Activated B cell treated with CpG ODN at 0.5 μM for 24 hours (primary cell): ENCODE measurements at regions of chr4 and their contacts with region 1.

Region 1: DNA sequence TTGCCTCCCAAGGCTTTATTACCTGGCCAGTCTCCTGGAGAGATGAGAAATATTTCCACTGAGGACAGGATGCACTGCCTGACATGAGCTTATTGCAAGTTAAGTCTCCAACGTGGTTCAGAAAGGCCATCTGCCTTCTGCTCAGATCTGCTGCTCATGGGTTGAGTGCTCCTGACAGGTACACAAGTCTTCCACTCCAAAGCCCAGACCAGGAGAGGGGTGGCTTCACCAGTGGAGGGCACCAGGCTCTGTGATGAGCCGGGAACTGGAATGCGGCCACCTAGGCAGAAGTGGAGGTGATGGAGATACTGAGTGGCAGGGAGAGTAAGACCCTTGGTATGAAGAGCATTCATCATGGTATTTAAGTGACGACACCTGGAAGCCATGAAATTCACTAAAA is 79.5 kb upstream of the IRF2 start:
- DNase-seq: no peak
- ATAC-seq: no peak
- H3K4me3 Mint-ChIP-seq: no peak overlapping the region
- H3K27ac Mint-ChIP-seq: no peak overlapping the region
- H3K4me1 Mint-ChIP-seq: peaks cover 1% of the 10 kb centered on the region
- H3K27me3 Mint-ChIP-seq: no peaks in the 10 kb centered on the region
- CTCF ChIP-seq: no peak

Region 2: DNA sequence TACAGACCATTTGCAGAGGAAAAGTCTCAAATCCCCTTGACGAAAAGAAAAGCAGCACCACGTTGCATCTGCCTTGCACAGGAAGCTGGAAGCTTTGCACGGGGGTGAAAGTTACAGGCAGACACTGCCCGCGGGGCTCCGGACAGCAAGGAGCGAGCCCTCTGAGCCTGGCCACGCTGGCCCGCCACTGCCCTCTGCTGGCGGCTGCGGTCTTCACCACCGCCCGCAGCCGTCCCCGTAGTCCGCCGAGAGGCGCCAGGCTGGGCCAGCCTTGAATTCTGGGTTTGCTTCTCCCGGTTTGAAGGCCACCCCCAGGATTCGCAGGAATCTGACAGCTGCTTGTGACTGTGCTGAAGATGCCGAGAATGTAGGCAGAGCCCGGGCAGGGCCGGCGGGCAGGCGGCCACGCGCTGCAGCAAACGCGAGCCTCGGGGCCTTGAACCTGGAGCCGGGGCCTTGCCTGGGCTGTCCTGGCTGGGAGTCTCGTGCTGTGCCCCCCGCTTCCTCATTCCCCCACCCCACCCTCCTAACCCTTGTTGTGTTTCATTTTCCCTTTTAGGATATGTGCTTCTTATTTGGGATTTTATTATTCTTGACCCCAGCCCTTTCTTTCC is 385.4 kb before region 1 on chr4:
- CTCF ChIA-PET with region 1: no interaction called
- POLR2A ChIA-PET with region 1: no interaction called
- intact Hi-C with region 1: loop called (anchors 10 kb)
- DNase-seq: peak; percentile 50
- ATAC-seq: peak; percentile 72
- H3K4me3 Mint-ChIP-seq: no peak overlapping the region
- H3K27ac Mint-ChIP-seq: no peak overlapping the region
- H3K4me1 Mint-ChIP-seq: peaks cover 5% of the 10 kb centered on the region
- H3K27me3 Mint-ChIP-seq: peaks cover 52% of the 10 kb centered on the region
- CTCF ChIP-seq: peak; percentile 47

Region 3: DNA sequence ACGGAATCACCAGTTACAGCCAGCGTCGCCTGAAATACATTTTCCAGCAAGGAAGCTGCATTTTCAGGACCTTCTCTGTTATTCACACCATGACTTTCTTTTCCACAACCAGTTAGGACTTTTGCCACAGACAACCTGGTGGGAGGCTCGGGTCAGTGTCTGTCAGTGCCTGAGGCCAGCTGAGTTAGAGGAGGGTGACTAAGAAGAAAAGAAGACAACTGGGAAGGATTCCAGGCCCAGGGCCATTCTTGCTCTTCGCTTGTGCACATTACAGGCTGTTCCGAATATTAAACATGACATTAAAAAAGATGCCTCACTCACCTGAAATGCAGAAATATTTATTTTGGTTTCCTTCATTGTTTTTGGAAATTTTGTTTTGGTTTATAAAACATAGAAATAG is 201.4 kb after region 1 on chr4:
- CTCF ChIA-PET with region 1: no interaction called
- POLR2A ChIA-PET with region 1: no interaction called
- intact Hi-C with region 1: no loop called
- DNase-seq: no peak
- ATAC-seq: no peak
- H3K4me3 Mint-ChIP-seq: no peak overlapping the region
- H3K27ac Mint-ChIP-seq: no peak overlapping the region
- H3K4me1 Mint-ChIP-seq: no peaks in the 10 kb centered on the region
- H3K27me3 Mint-ChIP-seq: no peaks in the 10 kb centered on the region
- CTCF ChIP-seq: no peak